Colonic mucosa (tissue), 4 donors: ENCODE measurements at regions of chr3 and their contacts with region 1.

Region 1: GRCh38 chr3:156151824-156152428 is 31.5 kb downstream of the KCNAB1 start:
- DNase-seq: peak; percentile 58
- H3K4me3 ChIP-seq: no peak overlapping the region
- H3K27ac ChIP-seq: no peak overlapping the region
- H3K4me1 ChIP-seq: no peaks in the 10 kb centered on the region
- H3K27me3 ChIP-seq: no peaks in the 10 kb centered on the region
- CTCF ChIP-seq: peak; percentile 66

Region 2: DNA sequence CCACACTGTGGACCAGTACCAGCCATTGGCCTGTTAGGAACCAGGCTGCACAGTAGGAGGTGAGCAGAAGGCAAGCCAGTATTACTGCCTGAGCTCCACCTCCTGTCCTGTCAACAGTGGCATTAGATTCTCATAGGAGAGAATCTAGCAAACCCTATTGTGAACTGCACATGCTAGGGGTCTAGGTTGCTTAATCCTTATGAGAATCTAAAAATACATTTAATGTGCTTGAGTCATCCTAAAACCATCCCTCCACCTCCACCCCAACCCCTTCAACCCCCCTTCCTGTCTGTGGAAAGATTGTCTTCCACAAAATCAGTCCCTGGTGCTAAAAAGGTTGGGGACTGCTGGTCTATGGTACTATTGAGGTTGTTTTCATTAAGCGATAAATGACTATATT is 80.9 kb before region 1 on chr3:
- intact Hi-C with region 1: no loop called
- DNase-seq: no peak
- H3K4me3 ChIP-seq: no peak overlapping the region
- H3K27ac ChIP-seq: no peak overlapping the region
- H3K4me1 ChIP-seq: no peaks in the 10 kb centered on the region
- H3K27me3 ChIP-seq: no peaks in the 10 kb centered on the region
- CTCF ChIP-seq: no peak

Region 3: DNA sequence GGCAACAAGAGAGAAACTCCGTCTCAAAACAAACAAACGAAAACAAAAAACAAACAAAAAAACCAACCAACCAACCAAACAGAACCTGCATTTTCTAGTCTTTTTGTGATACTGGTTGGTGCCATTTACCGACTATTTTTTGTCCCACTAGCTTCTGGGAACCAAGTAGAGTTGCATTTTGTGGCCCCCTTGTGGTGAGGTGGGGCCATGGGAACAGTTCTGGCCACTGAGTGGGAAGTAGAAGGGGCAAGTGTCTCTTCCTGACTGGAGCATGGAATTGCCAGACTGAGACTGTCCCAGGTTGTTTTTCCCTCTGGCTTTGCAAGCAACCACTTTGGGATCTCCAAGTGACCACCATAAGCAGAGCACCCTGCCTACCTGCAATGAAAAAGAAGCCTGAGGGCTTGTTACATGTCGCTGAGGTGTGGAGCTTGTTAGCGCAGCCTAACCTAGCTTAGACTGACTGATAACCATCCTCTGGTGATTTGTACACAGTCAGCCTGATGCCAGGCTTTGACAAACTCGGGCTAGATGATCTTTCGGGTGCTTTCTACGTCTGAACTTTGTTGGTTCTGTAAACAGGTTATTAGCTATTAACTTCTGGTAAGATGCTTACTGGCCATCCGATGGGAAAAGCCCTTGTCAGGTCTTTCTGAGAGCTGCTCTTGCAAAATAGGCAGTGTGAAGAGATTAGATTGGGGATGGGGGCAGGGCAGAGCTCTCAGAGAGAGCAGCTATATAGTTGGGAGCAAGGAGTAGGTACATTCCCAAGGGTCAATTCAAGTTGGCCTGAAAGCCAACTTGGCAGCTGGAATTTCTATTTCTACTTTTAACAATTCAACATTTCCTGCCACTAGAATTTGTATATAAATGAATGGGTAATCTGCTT is 230.8 kb after region 1 on chr3:
- intact Hi-C with region 1: loop called (anchors 5 kb)
- DNase-seq: peak; percentile 27
- H3K4me3 ChIP-seq: no peak overlapping the region
- H3K27ac ChIP-seq: no peak overlapping the region
- H3K4me1 ChIP-seq: no peaks in the 10 kb centered on the region
- H3K27me3 ChIP-seq: no peaks in the 10 kb centered on the region
- CTCF ChIP-seq: peak; percentile 70

Region 4: DNA sequence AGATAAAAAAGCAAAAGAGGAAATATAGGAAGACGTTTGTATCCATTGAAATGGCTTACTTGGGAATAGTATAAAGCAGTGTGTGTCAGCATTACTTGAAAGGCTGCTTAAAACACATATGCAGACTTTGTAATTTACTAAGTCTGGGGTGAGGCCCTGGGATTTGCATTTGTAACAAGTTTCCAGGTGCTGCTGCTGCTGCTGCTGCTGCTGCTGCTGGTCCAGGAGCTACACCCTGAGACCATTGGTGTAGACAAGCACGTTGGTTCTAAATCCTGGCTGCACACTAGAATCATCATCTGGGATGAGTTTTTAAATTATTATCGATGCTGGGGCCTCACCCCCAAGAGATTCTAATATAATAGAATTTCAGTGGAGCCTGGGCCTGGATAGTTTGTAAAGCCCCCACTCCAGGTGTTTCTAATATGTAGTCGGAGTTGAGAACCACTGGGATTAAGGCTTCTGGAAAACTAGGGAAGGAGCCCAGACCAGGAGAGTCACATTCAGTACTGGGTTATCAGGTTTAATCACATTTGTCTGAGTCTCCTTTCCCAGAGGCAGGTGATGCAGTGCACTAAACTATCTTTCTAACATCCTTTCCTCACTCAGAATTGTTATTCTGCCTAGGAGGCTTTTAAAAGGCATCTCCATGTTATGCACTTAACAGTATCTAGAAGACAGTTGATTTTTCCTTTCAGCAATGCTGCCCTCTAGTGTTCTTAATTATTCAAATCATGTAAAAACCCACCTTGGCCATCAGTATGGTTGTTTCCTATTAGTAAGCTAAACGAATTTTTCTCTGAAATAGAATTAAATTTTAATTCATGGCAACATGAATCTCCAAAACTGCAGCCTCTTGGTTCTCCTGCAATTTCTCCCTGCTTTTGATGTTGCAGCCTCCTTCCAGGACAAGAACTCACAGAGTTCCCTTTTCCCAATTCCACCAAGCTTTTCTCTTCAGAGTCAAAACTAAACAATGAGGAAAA is 357.6 kb after region 1 on chr3:
- intact Hi-C with region 1: loop called (anchors 5 kb)
- DNase-seq: no peak
- H3K4me3 ChIP-seq: no peak overlapping the region
- H3K27ac ChIP-seq: no peak overlapping the region
- H3K4me1 ChIP-seq: no peaks in the 10 kb centered on the region
- H3K27me3 ChIP-seq: no peaks in the 10 kb centered on the region
- CTCF ChIP-seq: peak; percentile 55

Region 5: DNA sequence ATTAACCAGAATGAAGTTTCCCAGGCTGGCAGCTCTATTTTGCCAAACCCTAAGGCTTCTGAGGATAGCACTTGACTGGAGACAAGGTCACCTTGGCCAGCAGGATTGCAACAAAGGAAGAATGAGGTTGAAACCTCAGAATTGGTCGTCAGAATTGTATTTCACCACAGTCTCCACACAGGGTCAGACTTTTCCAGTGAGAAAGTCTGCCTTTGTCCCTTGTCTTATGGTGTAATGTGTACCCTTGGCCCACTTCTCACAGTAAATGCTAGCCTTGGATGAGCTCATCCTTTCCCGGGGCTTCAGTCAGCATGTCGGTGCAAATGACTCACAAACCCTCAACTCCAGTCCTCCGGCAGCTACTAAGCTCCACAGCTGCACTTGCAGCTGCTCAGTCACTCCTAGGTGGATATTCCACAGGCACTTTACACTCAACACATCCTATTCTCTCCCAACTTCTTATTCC is 383.3 kb after region 1 on chr3:
- intact Hi-C with region 1: loop called (anchors 10 kb)
- DNase-seq: peak; percentile 23
- H3K4me3 ChIP-seq: no peak overlapping the region
- H3K27ac ChIP-seq: peak overlapping the region; percentile 5
- H3K4me1 ChIP-seq: no peaks in the 10 kb centered on the region
- H3K27me3 ChIP-seq: no peaks in the 10 kb centered on the region
- CTCF ChIP-seq: no peak

Region 6: GRCh38 chr3:157081681-157082210 is 929.8 kb after region 1 on chr3:
- intact Hi-C with region 1: loop called (anchors 10 kb)
- DNase-seq: peak; percentile 94
- H3K4me3 ChIP-seq: no peak overlapping the region
- H3K27ac ChIP-seq: no peak overlapping the region
- H3K4me1 ChIP-seq: no peaks in the 10 kb centered on the region
- H3K27me3 ChIP-seq: no peaks in the 10 kb centered on the region
- CTCF ChIP-seq: peak; percentile 96

Region 7: GRCh38 chr3:157130467-157131251 is 978.7 kb after region 1 on chr3:
- intact Hi-C with region 1: loop called (anchors 10 kb)
- DNase-seq: peak; percentile 94
- H3K4me3 ChIP-seq: no peak overlapping the region
- H3K27ac ChIP-seq: peak overlapping the region; percentile 94
- H3K4me1 ChIP-seq: peaks cover 27% of the 10 kb centered on the region
- H3K27me3 ChIP-seq: no peaks in the 10 kb centered on the region
- CTCF ChIP-seq: peak; percentile 56